Psoas muscle (tissue), 8 donors: ENCODE measurements at regions of chr10 and their contacts with region 1.

Region 1: DNA sequence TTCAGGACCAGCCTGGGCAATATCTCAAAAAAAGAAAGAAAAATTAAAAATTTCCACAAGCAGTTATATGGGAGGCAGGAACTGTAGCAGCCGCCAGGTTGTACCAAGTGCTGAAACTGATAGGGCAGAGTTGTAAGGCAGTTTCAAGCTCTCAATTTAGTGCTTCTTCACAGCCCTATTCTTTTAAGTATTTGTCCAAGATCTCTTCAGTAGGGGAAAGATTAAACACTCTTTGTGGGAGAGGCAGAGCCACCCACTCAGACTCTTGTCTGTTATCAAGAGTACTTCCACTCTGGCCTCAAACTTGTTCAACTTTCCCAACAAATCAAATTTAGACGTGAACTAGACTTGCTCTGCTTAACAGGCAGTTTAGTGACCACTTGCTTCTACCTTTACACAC is 228.7 kb downstream of the REEP3 start:
- DNase-seq: no peak
- ATAC-seq: no peak
- H3K4me3 ChIP-seq: no peak overlapping the region
- H3K27ac ChIP-seq: no peak overlapping the region
- H3K4me1 ChIP-seq: no peaks in the 10 kb centered on the region
- H3K27me3 ChIP-seq: no peaks in the 10 kb centered on the region
- CTCF ChIP-seq: no peak

Region 2: DNA sequence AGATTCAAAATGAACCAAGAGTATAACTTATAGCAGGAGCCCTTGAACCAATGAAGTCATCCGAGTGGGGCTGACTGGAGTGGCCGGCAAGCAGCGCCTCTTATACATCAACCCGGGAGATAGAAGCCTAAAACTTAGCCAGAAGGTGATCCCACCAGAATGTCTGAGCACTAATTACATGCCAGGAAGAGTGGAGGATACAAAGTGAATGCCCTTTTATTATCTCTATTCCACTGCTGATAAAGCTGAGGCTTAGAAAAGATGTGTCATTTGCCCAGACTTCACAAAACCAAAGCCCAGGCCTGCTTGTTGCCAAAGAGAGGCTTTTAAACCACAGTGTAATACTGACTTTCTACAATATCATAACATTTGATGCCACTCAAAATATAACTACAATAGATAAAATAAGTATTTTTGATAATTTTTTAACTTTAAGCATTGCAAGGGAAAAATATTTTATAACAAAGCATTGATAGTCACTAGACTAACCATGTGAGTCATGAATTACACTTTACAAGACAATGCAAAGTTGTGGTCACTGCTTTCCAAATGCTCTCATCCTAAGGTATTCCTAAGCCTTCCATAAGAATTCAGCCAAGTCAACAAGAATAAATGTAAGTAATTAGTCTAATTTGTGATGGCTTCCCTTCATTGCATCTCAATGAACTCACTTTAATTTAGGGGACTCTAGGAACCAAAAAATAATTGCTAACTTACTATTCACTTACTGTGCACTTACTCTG is 1907.0 kb before region 1 on chr10:
- intact Hi-C with region 1: loop called in 1 of 2 experiments (anchors 5 kb)
- DNase-seq: no peak
- ATAC-seq: no peak
- H3K4me3 ChIP-seq: no peak overlapping the region
- H3K27ac ChIP-seq: no peak overlapping the region
- H3K4me1 ChIP-seq: peaks cover 3% of the 10 kb centered on the region
- H3K27me3 ChIP-seq: no peaks in the 10 kb centered on the region
- CTCF ChIP-seq: no peak

Region 3: GRCh38 chr10:63819753-63820329 is 69.9 kb after region 1 on chr10:
- intact Hi-C with region 1: no loop called
- DNase-seq: peak; percentile 63 to 75
- ATAC-seq: no peak
- H3K4me3 ChIP-seq: no peak overlapping the region
- H3K27ac ChIP-seq: no peak overlapping the region
- H3K4me1 ChIP-seq: no peaks in the 10 kb centered on the region
- H3K27me3 ChIP-seq: peaks cover 0 to 1% (median 0%) of the 10 kb centered on the region in 3 donors
- CTCF ChIP-seq: peak; percentile 68